CD8-positive, alpha-beta T cell (primary cell): ENCODE measurements at regions of chrX and their contacts with region 1.

Region 1: DNA sequence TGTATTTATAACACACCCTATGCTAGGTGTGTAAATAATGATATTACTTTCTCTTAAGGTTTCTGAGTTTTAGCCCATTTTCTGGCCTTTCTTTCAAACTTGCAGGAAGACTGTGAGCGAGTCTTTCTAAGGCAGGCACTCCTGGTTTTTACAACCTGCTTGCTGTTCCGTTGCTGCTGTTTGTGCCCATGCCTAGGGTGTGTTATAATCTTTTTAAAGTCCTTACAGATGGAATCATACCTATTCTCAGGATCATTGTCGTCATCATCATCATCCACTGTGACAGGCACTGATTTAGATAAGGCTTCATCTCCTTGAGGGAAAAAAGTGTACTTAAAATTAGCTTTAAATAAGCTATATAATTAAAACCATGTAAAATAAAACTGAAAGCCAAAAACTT is 110.0 kb downstream of the ATRX start:
- DNase-seq: no peak
- ATAC-seq: no peak
- H3K4me3 ChIP-seq: no peak overlapping the region
- H3K4me3 Mint-ChIP-seq: no peak overlapping the region
- H3K27ac ChIP-seq: no peak overlapping the region
- H3K27ac Mint-ChIP-seq: no peak overlapping the region
- H3K4me1 ChIP-seq: no peaks in the 10 kb centered on the region
- H3K4me1 Mint-ChIP-seq: no peaks in the 10 kb centered on the region
- H3K27me3 ChIP-seq: no peaks in the 10 kb centered on the region
- H3K27me3 Mint-ChIP-seq: no peaks in the 10 kb centered on the region
- CTCF ChIP-seq: no peak

Region 2: GRCh38 chrX:78029663-78030062 is 353.7 kb after region 1 on chrX:
- CTCF ChIA-PET with region 1: no interaction called
- POLR2A ChIA-PET with region 1: no interaction called
- intact Hi-C with region 1: loop called in 1 of 2 experiments (anchors 10 kb)
- DNase-seq: peak in 2 of 9 experiments; percentile 10 to 15
- ATAC-seq: no peak
- H3K4me3 ChIP-seq: no peak overlapping the region
- H3K4me3 Mint-ChIP-seq: no peak overlapping the region
- H3K27ac ChIP-seq: no peak overlapping the region
- H3K27ac Mint-ChIP-seq: no peak overlapping the region
- H3K4me1 ChIP-seq: no peaks in the 10 kb centered on the region
- H3K4me1 Mint-ChIP-seq: peaks cover 2% of the 10 kb centered on the region
- H3K27me3 ChIP-seq: no peaks in the 10 kb centered on the region
- H3K27me3 Mint-ChIP-seq: no peaks in the 10 kb centered on the region
- CTCF ChIP-seq: no peak